A549 (cell line): ENCODE measurements at regions of chr1 and their contacts with region 1.

Region 1: DNA sequence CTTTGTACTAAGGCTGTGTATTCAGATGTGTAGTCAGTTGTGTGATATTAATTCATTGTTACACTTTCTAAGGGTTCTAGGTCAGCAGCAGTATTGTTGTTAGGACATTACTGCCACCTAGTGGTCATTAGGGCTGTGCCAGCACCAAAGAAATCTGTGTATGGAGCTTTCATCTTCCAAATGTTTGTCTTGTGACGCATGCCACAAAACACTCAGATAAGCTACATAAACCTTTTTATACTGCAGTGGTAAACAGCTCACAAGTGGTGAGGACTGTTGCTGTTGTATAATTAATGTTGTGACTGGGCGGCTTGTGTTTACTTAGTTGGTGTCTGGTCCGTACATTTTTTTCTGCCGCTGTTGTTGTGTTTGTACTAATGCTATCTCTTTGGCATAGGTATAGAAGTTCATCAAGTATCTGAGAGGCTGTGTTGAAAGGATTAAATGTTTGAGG is 51.7 kb downstream of the S1PR1 start:
- DNase-seq: peak; percentile 51 to 69
- ATAC-seq: peak; percentile 95 to 98
- H3K4me3 ChIP-seq: no peak overlapping the region
- H3K27ac ChIP-seq: no peak overlapping the region
- H3K4me1 ChIP-seq: no peaks in the 10 kb centered on the region
- CTCF ChIP-seq: peak; percentile 79
- EP300 ChIP-seq: no peak
- POLR2A ChIP-seq: no peak
- RAD21 ChIP-seq: peak; percentile 79 to 80

Region 2: DNA sequence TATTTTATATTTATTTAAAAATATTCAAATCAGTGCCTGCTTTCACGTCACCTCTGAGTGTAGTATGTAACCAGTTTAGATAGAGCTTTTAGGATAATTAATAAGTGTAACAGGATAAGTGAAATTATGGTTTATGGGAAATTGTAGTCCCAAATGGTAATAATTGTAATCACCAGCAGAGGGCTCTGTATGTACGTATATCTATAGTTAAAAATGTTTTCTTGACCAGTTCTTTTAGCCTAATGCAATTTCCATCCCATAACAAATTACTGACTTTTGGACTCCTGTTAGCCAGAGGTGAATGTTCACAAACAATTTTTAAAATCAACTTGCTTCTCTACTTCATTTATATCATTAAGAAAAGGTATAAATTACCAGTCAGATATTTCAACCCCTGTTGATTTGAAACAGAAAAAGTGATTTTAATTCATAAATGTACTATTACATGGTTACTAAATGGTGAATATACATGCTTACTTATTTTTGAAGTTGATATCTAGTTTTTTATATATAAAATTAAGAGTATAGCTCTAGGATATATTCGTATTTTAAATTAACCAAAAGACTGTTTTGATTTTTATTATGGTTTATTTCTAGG is 367.3 kb before region 1 on chr1:
- CTCF ChIA-PET with region 1: interaction called, 15 read pairs
- POLR2A ChIA-PET with region 1: no interaction called
- DNase-seq: peak; percentile 1 to 45
- ATAC-seq: no peak
- H3K4me3 ChIP-seq: no peak overlapping the region
- H3K27ac ChIP-seq: no peak overlapping the region
- H3K4me1 ChIP-seq: no peaks in the 10 kb centered on the region
- CTCF ChIP-seq: peak; percentile 65
- EP300 ChIP-seq: no peak
- POLR2A ChIP-seq: no peak
- RAD21 ChIP-seq: peak; percentile 46 to 67

Region 3: GRCh38 chr1:101216623-101217022 is 71.9 kb before region 1 on chr1:
- CTCF ChIA-PET with region 1: no interaction called
- POLR2A ChIA-PET with region 1: no interaction called
- DNase-seq: no peak
- ATAC-seq: no peak
- H3K4me3 ChIP-seq: no peak overlapping the region
- H3K27ac ChIP-seq: no peak overlapping the region
- H3K4me1 ChIP-seq: no peaks in the 10 kb centered on the region
- CTCF ChIP-seq: no peak
- EP300 ChIP-seq: no peak
- POLR2A ChIP-seq: no peak
- RAD21 ChIP-seq: no peak

Region 4: GRCh38 chr1:101238681-101239094 is 49.8 kb before region 1 on chr1:
- CTCF ChIA-PET with region 1: interaction called, 14 read pairs
- POLR2A ChIA-PET with region 1: no interaction called
- DNase-seq: peak; percentile 55 to 66
- ATAC-seq: peak; percentile 81 to 87
- H3K4me3 ChIP-seq: no peak overlapping the region
- H3K27ac ChIP-seq: no peak overlapping the region
- H3K4me1 ChIP-seq: peaks cover 12% of the 10 kb centered on the region; the same call in 2 of the 3 replicates
- CTCF ChIP-seq: peak; percentile 61
- EP300 ChIP-seq: no peak
- POLR2A ChIP-seq: no peak
- RAD21 ChIP-seq: peak; percentile 55 to 63

Region 5: DNA sequence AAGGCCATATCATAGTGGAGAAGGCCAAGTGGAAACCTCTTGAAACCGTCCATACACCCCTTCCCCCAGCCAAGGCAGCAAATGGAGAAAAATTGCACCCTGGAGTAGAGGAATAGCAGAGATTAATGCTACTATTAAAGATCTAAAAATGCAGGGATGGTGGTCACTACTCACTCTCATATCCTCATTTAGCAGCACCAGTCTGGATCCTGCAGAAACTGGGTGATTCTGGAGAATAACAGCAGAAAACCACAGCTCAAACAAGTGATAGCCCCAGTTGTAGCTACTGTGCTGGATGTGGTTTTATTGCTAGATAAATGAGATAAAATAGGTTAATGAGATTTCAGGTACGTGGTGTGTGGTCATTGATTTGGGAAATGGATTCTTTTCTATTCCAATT is 21.4 kb before region 1 on chr1:
- CTCF ChIA-PET with region 1: interaction called, 13 read pairs
- POLR2A ChIA-PET with region 1: no interaction called
- DNase-seq: no peak
- ATAC-seq: no peak
- H3K4me3 ChIP-seq: no peak overlapping the region
- H3K27ac ChIP-seq: no peak overlapping the region
- H3K4me1 ChIP-seq: peaks cover 3% of the 10 kb centered on the region; the same call in 1 of the 3 replicates
- CTCF ChIP-seq: no peak
- EP300 ChIP-seq: no peak
- POLR2A ChIP-seq: no peak
- RAD21 ChIP-seq: no peak

Region 6: DNA sequence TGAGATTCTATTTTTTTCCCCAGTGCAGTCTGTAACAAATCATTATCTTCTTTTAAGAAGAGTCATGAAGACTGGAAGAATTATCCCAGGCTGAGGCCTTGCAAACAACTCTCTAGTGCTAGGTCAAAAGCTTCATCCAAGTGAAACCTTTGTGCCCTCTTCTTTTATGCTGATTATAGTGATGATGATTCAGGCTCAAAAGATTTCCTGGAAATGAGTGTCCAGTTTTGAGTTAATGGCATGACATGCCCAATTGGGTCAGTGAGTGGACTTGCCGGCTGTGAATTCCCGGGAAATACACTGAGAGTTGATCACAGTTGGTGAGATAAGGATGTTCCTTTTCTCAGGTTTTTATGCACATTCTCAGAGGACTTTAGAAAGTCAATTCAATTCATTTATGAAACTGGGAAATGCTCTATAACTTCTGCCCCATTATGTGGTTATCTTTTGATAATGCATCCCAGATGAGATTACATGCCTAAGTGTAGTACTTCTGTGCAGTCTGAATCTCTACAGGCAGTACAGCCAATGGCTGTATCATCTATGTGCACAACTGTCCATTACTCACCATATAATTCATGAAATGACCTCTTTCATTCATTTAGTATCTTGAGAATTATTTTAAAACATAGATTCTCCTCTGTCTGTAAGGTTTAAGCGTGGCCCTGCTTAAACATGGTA is 14.5 kb after region 1 on chr1:
- CTCF ChIA-PET with region 1: interaction called, 26 read pairs
- POLR2A ChIA-PET with region 1: no interaction called
- DNase-seq: no peak
- ATAC-seq: no peak
- H3K4me3 ChIP-seq: no peak overlapping the region
- H3K27ac ChIP-seq: no peak overlapping the region
- H3K4me1 ChIP-seq: no peaks in the 10 kb centered on the region
- CTCF ChIP-seq: no peak
- EP300 ChIP-seq: no peak
- POLR2A ChIP-seq: no peak
- RAD21 ChIP-seq: no peak

Region 7: GRCh38 chr1:101438359-101438758 is 149.8 kb after region 1 on chr1:
- CTCF ChIA-PET with region 1: no interaction called
- POLR2A ChIA-PET with region 1: no interaction called
- DNase-seq: no peak
- ATAC-seq: no peak
- H3K4me3 ChIP-seq: no peak overlapping the region
- H3K27ac ChIP-seq: no peak overlapping the region
- H3K4me1 ChIP-seq: no peaks in the 10 kb centered on the region
- CTCF ChIP-seq: no peak
- EP300 ChIP-seq: no peak
- POLR2A ChIP-seq: no peak
- RAD21 ChIP-seq: peak in 1 of 2 experiments; percentile 19; a peak in 1 of 5 replicates